ENCODE measurements at regions of chr11 and their contacts with region 1.

Region 1: DNA sequence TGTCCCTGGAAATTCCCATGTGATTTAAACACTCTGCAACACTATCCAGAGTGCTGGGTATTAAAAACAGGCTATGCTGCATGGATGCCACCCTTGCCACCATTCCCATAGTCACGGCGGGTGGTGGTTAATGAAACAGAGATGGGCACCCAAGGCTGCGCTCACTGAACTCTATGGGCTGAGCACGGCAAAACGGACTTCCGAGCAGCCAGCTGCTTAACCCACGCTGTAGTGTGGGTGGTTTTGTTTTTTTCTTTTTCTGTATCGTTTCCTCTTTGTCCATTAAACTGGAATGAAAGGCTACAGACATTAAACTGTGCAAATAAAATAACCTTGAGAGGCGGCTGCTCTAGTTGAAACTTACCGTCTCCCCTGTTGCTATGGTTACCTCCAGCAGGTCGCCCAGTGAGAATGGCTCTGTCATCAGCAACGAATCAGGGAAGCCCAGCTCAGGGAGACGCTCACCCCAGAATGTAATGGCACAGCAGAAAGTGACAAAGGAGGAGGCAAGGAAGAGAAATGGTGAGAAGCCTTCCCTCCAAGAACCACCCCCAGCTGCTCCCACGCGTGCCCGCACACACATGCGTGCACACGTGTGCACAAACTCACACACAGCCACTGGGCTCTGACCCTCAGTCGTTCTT is 102.1 kb downstream of the C11orf91 start:
- DNase-seq: no peak

Region 2: GRCh38 chr11:33558097-33558496 is 40.5 kb before region 1 on chr11:
- intact Hi-C with region 1: loop called in 1 of 2 experiments (anchors 2 kb)
- DNase-seq: no peak

Region 3: GRCh38 chr11:33582636-33583325 is 15.8 kb before region 1 on chr11:
- intact Hi-C with region 1: loop called in 1 of 2 experiments (anchors 1 kb)
- DNase-seq: no peak

Region 4: GRCh38 chr11:34126959-34127848 is 528.7 kb after region 1 on chr11:
- intact Hi-C with region 1: loop called in 1 of 2 experiments (anchors 5 kb)
- DNase-seq: no peak

Measured in posterior vena cava (tissue), 2 donors.